ENCODE measurements at regions of chr10 and their contacts with region 1.

Region 1: DNA sequence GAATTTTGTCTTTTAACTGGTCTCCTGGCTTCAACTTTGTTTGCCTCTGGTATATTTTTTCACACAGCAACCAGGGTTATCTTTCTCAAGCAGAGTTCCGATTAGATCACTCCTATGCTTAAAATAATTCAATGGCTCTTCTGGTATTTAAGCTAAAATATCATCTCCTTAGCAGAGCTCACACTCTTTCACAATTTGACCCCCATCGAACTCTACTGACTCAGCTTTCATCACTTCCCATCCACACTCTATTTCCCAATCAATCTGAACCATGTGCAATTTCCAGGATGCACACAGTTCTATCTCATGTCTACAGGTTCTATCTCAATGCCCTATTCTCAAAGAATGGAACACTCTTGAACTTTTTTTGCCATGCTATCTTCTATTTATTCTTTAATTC is 809.5 kb downstream of the GRID1 start:
- DNase-seq: no peak
- ATAC-seq: peak in 1 of 2 donors; percentile 61
- H3K4me3 ChIP-seq: no peak overlapping the region
- H3K27ac ChIP-seq: no peak overlapping the region
- H3K4me1 ChIP-seq: no peaks in the 10 kb centered on the region
- H3K27me3 ChIP-seq: no peaks in the 10 kb centered on the region
- CTCF ChIP-seq: no peak
- POLR2A ChIP-seq: no peak

Region 2: GRCh38 chr10:85464331-85464730 is 92.7 kb before region 1 on chr10:
- in situ Hi-C with region 1: no loop called
- intact Hi-C with region 1: no loop called
- DNase-seq: no peak
- ATAC-seq: no peak
- H3K4me3 ChIP-seq: no peak overlapping the region
- H3K27ac ChIP-seq: no peak overlapping the region
- H3K4me1 ChIP-seq: no peaks in the 10 kb centered on the region
- H3K27me3 ChIP-seq: no peaks in the 10 kb centered on the region
- CTCF ChIP-seq: no peak
- POLR2A ChIP-seq: no peak

Region 3: DNA sequence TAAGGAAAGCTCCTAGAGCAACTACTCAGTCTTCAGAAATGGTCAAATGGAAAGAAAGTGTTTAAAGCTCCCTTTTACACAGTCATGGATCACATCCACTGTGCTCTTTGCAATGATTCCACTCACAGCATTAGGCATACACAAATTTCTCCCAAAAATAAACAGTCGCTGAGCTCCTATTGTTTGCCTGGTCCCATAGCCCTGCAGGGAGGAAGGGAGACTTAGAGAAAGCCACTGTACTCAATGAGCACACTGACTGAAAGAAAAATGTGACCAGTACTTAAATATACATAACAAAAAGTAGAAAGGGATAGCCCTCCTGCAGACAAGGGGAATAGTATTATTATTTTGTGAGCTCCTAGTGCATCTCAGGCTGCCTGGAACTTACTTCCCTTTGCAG is 43.7 kb before region 1 on chr10:
- in situ Hi-C with region 1: no loop called
- intact Hi-C with region 1: no loop called
- DNase-seq: no peak
- ATAC-seq: no peak
- H3K4me3 ChIP-seq: no peak overlapping the region
- H3K27ac ChIP-seq: no peak overlapping the region
- H3K4me1 ChIP-seq: no peaks in the 10 kb centered on the region
- H3K27me3 ChIP-seq: no peaks in the 10 kb centered on the region
- CTCF ChIP-seq: no peak
- POLR2A ChIP-seq: no peak

Region 4: GRCh38 chr10:86389441-86390193 is 832.5 kb after region 1 on chr10:
- in situ Hi-C with region 1: loop called in 1 of 4 experiments (anchors 10 kb)
- intact Hi-C with region 1: no loop called
- DNase-seq: no peak
- ATAC-seq: no peak
- H3K4me3 ChIP-seq: peak overlapping the region in 3 of 4 donors; percentile 4 to 35 (median 25)
- H3K27ac ChIP-seq: no peak overlapping the region
- H3K4me1 ChIP-seq: peaks cover 0 to 6% of the 10 kb centered on the region in 2 donors
- H3K27me3 ChIP-seq: peaks cover 24 to 30% (median 25%) of the 10 kb centered on the region in 3 donors
- CTCF ChIP-seq: no peak
- POLR2A ChIP-seq: no peak

Measured in gastrocnemius medialis (tissue), 4 donors.